Colonic mucosa (tissue), 4 donors: ENCODE measurements at regions of chr12 and their contacts with region 1.

Region 1: GRCh38 chr12:101323255-101323654 is 43.4 kb downstream of the UTP20 start:
- DNase-seq: no peak
- H3K4me3 ChIP-seq: no peak overlapping the region
- H3K27ac ChIP-seq: no peak overlapping the region
- H3K4me1 ChIP-seq: no peaks in the 10 kb centered on the region
- H3K27me3 ChIP-seq: no peaks in the 10 kb centered on the region
- CTCF ChIP-seq: no peak

Region 2: DNA sequence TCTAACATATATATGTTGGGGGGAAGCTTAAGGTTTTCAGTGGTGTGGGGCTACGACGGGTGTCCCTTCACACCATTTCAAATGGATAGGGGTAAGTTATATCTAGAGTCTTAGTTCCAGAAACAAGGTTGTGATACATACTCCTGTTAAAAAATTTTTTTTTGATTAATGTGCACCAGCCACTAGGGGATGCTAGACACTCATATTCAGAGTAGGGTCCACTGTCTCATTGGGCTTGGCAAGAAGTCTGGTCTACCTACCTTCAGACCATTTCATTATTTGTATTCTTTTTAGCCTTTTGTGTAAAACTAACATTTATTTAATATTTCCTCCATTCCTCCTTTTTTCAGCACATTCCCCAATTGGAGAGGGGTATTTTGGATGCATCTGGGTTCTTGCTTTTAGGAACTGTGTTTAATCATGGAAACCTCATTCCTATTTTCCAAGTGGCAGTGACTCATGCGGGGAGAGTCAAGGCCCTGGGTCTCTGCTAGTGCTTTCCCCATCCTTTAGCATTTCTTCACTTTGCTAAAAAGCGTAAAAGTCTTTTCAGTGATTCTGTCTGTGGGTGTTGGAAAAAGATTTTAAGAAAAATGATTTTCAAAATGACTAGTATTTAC is 495.2 kb before region 1 on chr12:
- intact Hi-C with region 1: loop called (anchors 5 kb)
- DNase-seq: no peak
- H3K4me3 ChIP-seq: no peak overlapping the region
- H3K27ac ChIP-seq: no peak overlapping the region
- H3K4me1 ChIP-seq: no peaks in the 10 kb centered on the region
- H3K27me3 ChIP-seq: no peaks in the 10 kb centered on the region
- CTCF ChIP-seq: peak; percentile 57

Region 3: DNA sequence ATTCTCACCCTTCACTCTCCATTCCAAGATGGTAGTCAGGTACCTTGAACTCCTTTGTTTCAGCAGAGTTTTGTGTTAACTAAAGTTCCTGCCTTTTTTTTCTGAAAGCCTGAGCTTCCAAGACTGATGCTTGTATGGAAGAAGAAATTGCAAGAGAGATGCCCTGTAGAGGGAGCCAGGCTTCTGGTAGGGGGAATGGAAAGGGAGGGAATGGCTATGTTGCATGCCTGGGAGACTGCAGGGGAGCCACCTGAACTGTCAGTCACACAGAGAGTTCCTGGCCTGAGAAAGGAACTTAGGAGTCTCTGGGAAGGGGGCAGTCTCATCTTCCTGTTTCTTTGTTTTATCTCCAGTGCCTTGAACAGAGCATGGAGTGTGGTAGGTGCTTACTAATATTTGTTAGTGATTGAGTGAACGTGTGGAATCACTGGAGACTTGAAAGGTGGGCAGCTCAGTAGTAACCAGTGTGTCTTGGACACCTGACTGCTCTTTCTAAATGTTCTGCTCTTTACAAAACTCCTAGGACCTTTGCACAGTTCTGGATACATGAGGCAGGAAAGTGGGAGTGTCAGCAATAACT is 396.5 kb before region 1 on chr12:
- intact Hi-C with region 1: loop called (anchors 5 kb)
- DNase-seq: peak; percentile 23
- H3K4me3 ChIP-seq: no peak overlapping the region
- H3K27ac ChIP-seq: no peak overlapping the region
- H3K4me1 ChIP-seq: no peaks in the 10 kb centered on the region
- H3K27me3 ChIP-seq: no peaks in the 10 kb centered on the region
- CTCF ChIP-seq: peak; percentile 12

Region 4: DNA sequence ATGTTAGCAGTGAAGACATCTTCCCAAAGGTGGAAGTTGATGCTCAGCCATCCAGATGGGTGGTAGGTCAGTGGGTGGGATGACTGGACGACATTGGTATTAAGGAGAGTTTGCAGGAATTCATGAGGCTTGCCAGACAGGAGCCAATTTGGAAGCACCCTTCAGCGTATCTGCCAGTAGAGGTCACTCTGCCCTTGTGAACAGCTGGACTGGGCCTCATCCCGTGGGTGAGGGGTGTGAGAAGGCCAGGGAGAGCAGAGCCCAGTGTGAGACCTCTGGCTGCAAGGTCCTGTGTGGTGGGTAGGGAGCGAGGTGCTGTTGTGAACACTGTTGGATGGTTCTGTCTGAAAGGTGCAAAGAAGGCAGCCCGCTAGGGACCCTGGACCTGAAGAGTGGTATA is 150.9 kb before region 1 on chr12:
- intact Hi-C with region 1: loop called (anchors 5 kb)
- DNase-seq: peak; percentile 23
- H3K4me3 ChIP-seq: no peak overlapping the region
- H3K27ac ChIP-seq: no peak overlapping the region
- H3K4me1 ChIP-seq: no peaks in the 10 kb centered on the region
- H3K27me3 ChIP-seq: no peaks in the 10 kb centered on the region
- CTCF ChIP-seq: peak; percentile 27

Region 5: DNA sequence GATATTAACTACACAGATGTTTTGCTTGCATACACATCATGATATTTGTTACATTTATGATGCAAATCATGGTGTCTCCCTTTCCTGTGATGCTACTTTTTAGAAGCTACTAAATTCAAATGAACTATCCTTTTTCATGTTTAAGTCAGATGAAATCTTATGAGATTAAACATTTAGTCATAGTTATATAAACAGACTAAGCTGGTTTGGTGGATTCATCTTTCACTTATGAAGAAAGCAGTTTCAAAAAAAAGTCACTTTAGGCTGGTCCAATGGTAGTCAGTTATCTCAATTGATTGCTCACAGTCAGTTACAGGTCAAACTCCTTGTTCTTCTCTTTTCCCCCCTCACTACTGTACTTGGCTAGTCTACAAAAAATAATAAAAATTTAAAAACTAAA is 396.3 kb after region 1 on chr12:
- intact Hi-C with region 1: no loop called
- DNase-seq: no peak
- H3K4me3 ChIP-seq: no peak overlapping the region
- H3K27ac ChIP-seq: no peak overlapping the region
- H3K4me1 ChIP-seq: no peaks in the 10 kb centered on the region
- H3K27me3 ChIP-seq: no peaks in the 10 kb centered on the region
- CTCF ChIP-seq: no peak